Activated CD4-positive, alpha-beta memory T cell treated with anti-CD3 and anti-CD28 coated beads for 36 hours (primary cell): ENCODE measurements at regions of chr11 and their contacts with region 1.

Region 1: DNA sequence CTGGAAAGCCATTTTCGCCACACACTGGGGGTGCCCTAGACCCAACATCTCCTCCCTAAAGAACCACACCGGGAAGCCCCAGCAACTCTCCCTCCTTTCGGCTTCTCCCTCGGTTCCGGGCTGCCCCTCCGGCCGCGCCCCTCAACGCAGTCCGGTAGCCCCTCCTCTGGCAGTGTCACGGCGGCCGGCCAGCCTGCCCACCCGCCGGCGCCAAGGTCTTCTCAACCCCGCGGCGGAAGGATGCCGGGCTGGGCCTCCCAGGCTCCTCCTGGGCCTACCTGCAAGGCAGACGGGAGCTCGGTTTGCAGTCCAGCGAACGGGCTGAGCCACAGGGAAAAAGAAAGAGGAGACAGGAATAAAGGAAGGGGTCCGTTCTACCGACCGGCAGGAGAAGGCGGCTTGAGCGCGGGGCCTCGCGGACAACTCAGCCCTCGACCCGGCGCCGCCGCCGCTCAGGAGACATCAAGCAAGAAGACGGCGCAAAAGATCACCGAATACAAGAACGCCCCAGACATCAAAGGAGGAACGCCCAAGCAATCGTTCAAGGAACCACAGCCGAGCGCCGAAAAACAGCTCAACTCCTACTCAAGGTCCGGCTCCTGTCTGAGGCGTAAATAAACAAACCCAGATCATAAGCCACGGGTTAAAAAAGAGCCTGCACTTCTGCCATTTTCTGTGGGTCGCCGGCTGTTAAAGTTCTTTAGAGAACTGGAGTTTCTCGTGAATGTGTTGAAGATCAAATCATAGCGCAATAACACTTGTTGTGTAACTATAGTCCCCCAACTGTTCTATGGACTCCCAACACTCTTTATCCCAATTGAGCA is at the start of gene AMBRA1:
- DNase-seq: peak; percentile 94
- H3K4me3 Mint-ChIP-seq: peak within 1 kb of the TSS; percentile 91
- H3K27ac Mint-ChIP-seq: peak within 1 kb of the TSS; percentile 78
- H3K4me1 Mint-ChIP-seq: peaks cover 43% of the 10 kb centered on the region
- H3K27me3 Mint-ChIP-seq: no peaks in the 10 kb centered on the region
- total RNA-seq, gene AMBRA1: 22.5 to 24.1 TPM

Region 2: GRCh38 chr11:46560300-46560991 is 33.3 kb before region 1 on chr11:
- CTCF ChIA-PET with region 1: no interaction called
- POLR2A ChIA-PET with region 1: interaction called, 3 read pairs
- intact Hi-C with region 1: loop called (anchors 2 kb)
- DNase-seq: peak; percentile 21
- H3K4me3 Mint-ChIP-seq: peak overlapping the region; percentile 79
- H3K27ac Mint-ChIP-seq: peak overlapping the region; percentile 91
- H3K4me1 Mint-ChIP-seq: peaks cover 62% of the 10 kb centered on the region
- H3K27me3 Mint-ChIP-seq: no peaks in the 10 kb centered on the region

Region 3: GRCh38 chr11:46603704-46604308 is 10.0 kb after region 1 on chr11:
- CTCF ChIA-PET with region 1: no interaction called
- POLR2A ChIA-PET with region 1: no interaction called
- intact Hi-C with region 1: no loop called
- DNase-seq: no peak
- H3K4me3 Mint-ChIP-seq: no peak overlapping the region
- H3K27ac Mint-ChIP-seq: no peak overlapping the region
- H3K4me1 Mint-ChIP-seq: peaks cover 4% of the 10 kb centered on the region
- H3K27me3 Mint-ChIP-seq: no peaks in the 10 kb centered on the region